MCF 10A (cell line): ENCODE measurements at regions of chr6 and their contacts with region 1.

Region 1: GRCh38 chr6:15245361-15246216 is at the start of gene JARID2:
- DNase-seq: peak; percentile 98
- H3K4me3 Mint-ChIP-seq: peak within 1 kb of the TSS; percentile 95
- H3K27ac Mint-ChIP-seq: peak within 1 kb of the TSS; percentile 94
- H3K4me1 Mint-ChIP-seq: peaks cover 10% of the 10 kb centered on the region
- H3K27me3 Mint-ChIP-seq: no peaks in the 10 kb centered on the region
- CTCF ChIP-seq: no peak
- total RNA-seq, gene JARID2: 21.0 and 27.8 TPM in 2 replicates

Region 2: DNA sequence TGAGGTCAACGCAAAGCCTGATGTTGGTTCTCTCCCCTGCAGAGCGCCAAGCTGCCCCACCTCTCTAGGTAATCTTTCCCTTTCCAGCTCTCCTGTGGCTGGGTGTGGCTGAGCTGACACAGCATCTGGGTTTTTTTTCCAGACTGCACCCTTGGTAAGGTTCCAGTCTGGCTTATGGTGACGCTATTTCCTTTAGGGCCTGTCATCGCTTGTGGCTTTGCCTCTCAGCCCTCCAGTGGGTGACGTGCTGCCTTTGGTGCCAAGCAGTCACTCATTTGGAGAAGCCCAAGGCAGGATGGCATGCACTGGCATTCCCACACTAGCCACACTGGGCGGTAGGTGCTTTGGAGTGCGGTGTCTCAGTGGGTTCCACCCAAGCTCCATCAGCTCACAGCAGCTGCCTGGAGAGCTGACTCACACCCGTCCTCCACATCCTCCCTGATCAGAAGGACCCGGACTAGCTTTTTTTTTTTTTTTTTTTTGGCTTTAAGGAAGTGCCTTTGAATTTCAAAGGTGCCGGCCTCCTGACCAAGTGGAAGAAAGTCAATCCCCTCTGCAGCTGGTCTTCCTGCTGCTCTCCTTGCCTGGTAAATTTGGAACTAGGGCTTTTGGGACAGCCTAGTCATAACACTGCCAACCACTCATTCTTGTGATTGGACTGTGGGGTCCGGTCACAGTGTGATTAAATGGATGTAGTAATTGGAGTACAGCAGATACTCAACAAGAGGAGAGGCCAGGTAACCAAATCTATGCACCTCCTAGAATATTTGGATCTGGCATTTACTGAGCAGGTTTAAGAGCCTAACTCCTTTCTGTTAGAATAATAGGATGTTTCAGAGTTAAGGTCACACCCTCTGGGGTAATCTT is 974.4 kb before region 1 on chr6:
- CTCF ChIA-PET with region 1: no interaction called
- POLR2A ChIA-PET with region 1: interaction called, 3 read pairs
- intact Hi-C with region 1: loop called (anchors 1 kb)
- DNase-seq: peak; percentile 97
- H3K4me3 Mint-ChIP-seq: no peak overlapping the region
- H3K27ac Mint-ChIP-seq: peak overlapping the region; percentile 64
- H3K4me1 Mint-ChIP-seq: peaks cover 37% of the 10 kb centered on the region
- H3K27me3 Mint-ChIP-seq: no peaks in the 10 kb centered on the region
- CTCF ChIP-seq: no peak

Region 3: GRCh38 chr6:14711056-14711703 is 534.4 kb before region 1 on chr6:
- CTCF ChIA-PET with region 1: interaction called, 3 read pairs
- POLR2A ChIA-PET with region 1: interaction called, 11 read pairs
- intact Hi-C with region 1: no loop called
- DNase-seq: peak; percentile 83
- H3K4me3 Mint-ChIP-seq: peak overlapping the region; percentile 11
- H3K27ac Mint-ChIP-seq: peak overlapping the region; percentile 68
- H3K4me1 Mint-ChIP-seq: peaks cover 48% of the 10 kb centered on the region
- H3K27me3 Mint-ChIP-seq: no peaks in the 10 kb centered on the region
- CTCF ChIP-seq: peak; percentile 43

Region 4: GRCh38 chr6:14799928-14800327 is 445.7 kb before region 1 on chr6:
- CTCF ChIA-PET with region 1: no interaction called
- POLR2A ChIA-PET with region 1: interaction called, 3 read pairs
- intact Hi-C with region 1: loop called (anchors 5 kb)
- DNase-seq: peak; percentile 83
- H3K4me3 Mint-ChIP-seq: no peak overlapping the region
- H3K27ac Mint-ChIP-seq: no peak overlapping the region
- H3K4me1 Mint-ChIP-seq: peaks cover 33% of the 10 kb centered on the region
- H3K27me3 Mint-ChIP-seq: no peaks in the 10 kb centered on the region
- CTCF ChIP-seq: no peak

Region 5: GRCh38 chr6:15001326-15001910 is 244.2 kb before region 1 on chr6:
- CTCF ChIA-PET with region 1: no interaction called
- POLR2A ChIA-PET with region 1: no interaction called
- intact Hi-C with region 1: no loop called
- DNase-seq: no peak
- H3K4me3 Mint-ChIP-seq: no peak overlapping the region
- H3K27ac Mint-ChIP-seq: no peak overlapping the region
- H3K4me1 Mint-ChIP-seq: no peaks in the 10 kb centered on the region
- H3K27me3 Mint-ChIP-seq: no peaks in the 10 kb centered on the region
- CTCF ChIP-seq: no peak

Region 6: GRCh38 chr6:15062516-15063252 is 182.9 kb before region 1 on chr6:
- CTCF ChIA-PET with region 1: no interaction called
- POLR2A ChIA-PET with region 1: interaction called, 3 read pairs
- intact Hi-C with region 1: loop called (anchors 5 kb)
- DNase-seq: peak; percentile 88
- H3K4me3 Mint-ChIP-seq: no peak overlapping the region
- H3K27ac Mint-ChIP-seq: peak overlapping the region; percentile 9
- H3K4me1 Mint-ChIP-seq: peaks cover 22% of the 10 kb centered on the region
- H3K27me3 Mint-ChIP-seq: no peaks in the 10 kb centered on the region
- CTCF ChIP-seq: no peak

Region 7: DNA sequence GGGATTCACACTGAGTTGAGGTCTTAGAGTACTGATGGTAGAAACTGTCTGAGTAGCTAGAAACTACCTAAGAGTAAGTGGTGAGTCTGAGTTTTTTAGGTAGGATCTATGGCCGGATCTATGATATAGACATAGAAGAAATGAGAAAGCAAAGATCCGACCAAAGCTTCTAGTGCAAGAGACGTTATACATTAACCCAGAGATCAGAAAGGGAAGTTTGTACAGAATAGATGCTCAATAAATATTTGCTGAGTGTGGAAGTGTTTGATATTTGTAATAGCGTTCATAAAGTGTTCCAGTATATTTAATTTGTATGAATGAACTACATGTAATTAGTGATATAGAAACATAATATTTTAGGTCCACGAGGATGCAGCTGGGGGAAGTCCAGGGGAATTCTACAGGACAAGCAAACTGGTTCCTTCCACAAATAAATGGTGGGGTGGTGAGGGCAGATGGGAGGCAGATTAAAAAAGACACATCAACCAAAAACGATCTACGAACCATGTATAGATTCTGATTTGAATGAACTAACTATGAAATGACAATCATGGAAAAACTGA is 31.7 kb before region 1 on chr6:
- CTCF ChIA-PET with region 1: no interaction called
- POLR2A ChIA-PET with region 1: no interaction called
- intact Hi-C with region 1: no loop called
- DNase-seq: no peak
- H3K4me3 Mint-ChIP-seq: no peak overlapping the region
- H3K27ac Mint-ChIP-seq: no peak overlapping the region
- H3K4me1 Mint-ChIP-seq: no peaks in the 10 kb centered on the region
- H3K27me3 Mint-ChIP-seq: no peaks in the 10 kb centered on the region
- CTCF ChIP-seq: no peak

Region 8: GRCh38 chr6:15389765-15390723 is 144.5 kb after region 1 on chr6:
- CTCF ChIA-PET with region 1: interaction called, 7 read pairs
- POLR2A ChIA-PET with region 1: interaction called, 3 read pairs
- intact Hi-C with region 1: loop called (anchors 5 kb)
- DNase-seq: peak; percentile 24
- H3K4me3 Mint-ChIP-seq: no peak overlapping the region
- H3K27ac Mint-ChIP-seq: peak overlapping the region; percentile 48
- H3K4me1 Mint-ChIP-seq: peaks cover 28% of the 10 kb centered on the region
- H3K27me3 Mint-ChIP-seq: no peaks in the 10 kb centered on the region
- CTCF ChIP-seq: peak; percentile 31

Region 9: GRCh38 chr6:15621203-15622044 is 375.8 kb after region 1 on chr6:
- CTCF ChIA-PET with region 1: interaction called, 3 read pairs
- POLR2A ChIA-PET with region 1: interaction called, 3 read pairs
- intact Hi-C with region 1: loop called (anchors 5 kb)
- DNase-seq: peak; percentile 21
- H3K4me3 Mint-ChIP-seq: no peak overlapping the region
- H3K27ac Mint-ChIP-seq: peak overlapping the region; percentile 85
- H3K4me1 Mint-ChIP-seq: peaks cover 12% of the 10 kb centered on the region
- H3K27me3 Mint-ChIP-seq: no peaks in the 10 kb centered on the region
- CTCF ChIP-seq: no peak